ENCODE measurements at regions of chr20 and their contacts with region 1.

Region 1: GRCh38 chr20:37564388-37565133 is 36.9 kb upstream of the BLCAP start:
- DNase-seq: no peak
- H3K4me3 ChIP-seq: no peak overlapping the region
- H3K27ac ChIP-seq: no peak overlapping the region
- H3K4me1 ChIP-seq: no peaks in the 10 kb centered on the region
- H3K27me3 ChIP-seq: peaks cover 3% of the 10 kb centered on the region
- CTCF ChIP-seq: peak; percentile 75 to 89 (median 82)
- POLR2A ChIP-seq: no peak

Region 2: GRCh38 chr20:37519508-37520128 is 44.9 kb before region 1 on chr20:
- intact Hi-C with region 1: no loop called
- DNase-seq: no peak
- H3K4me3 ChIP-seq: no peak overlapping the region
- H3K27ac ChIP-seq: peak overlapping the region; percentile 71 to 88
- H3K4me1 ChIP-seq: peaks cover 35% of the 10 kb centered on the region
- H3K27me3 ChIP-seq: no peaks in the 10 kb centered on the region
- CTCF ChIP-seq: peak in 1 of 4 experiments; percentile 7
- POLR2A ChIP-seq: no peak

Region 3: DNA sequence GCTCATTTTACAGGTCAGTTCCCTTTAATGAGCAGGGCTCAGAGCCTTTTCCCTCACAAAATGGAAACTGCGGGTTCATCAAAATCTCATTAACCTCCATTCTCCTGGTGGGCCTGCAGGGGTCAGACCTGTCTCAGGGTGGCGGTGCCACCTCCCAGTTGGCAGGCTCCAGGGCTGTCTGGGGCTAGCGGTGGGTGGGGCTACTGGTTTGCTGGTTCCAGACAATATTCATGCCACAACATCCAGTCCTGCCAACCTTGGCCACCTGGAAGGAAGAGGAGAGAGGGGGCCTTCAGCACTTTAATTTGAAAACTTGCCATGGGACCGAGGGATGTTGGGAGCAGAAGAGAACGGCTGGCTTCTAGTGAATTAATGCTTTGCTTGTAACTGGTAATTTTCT is 87.4 kb after region 1 on chr20:
- intact Hi-C with region 1: no loop called
- DNase-seq: peak; percentile 21
- H3K4me3 ChIP-seq: no peak overlapping the region
- H3K27ac ChIP-seq: no peak overlapping the region
- H3K4me1 ChIP-seq: no peaks in the 10 kb centered on the region
- H3K27me3 ChIP-seq: no peaks in the 10 kb centered on the region
- CTCF ChIP-seq: peak in 3 of 4 experiments; percentile 30 to 61 (median 44)
- POLR2A ChIP-seq: no peak

Region 4: GRCh38 chr20:37734228-37734985 is 169.8 kb after region 1 on chr20:
- intact Hi-C with region 1: no loop called
- DNase-seq: no peak
- H3K4me3 ChIP-seq: no peak overlapping the region
- H3K27ac ChIP-seq: peak overlapping the region in 1 of 2 donors; percentile 3
- H3K4me1 ChIP-seq: no peaks in the 10 kb centered on the region
- H3K27me3 ChIP-seq: no peaks in the 10 kb centered on the region
- CTCF ChIP-seq: no peak
- POLR2A ChIP-seq: no peak

Region 5: DNA sequence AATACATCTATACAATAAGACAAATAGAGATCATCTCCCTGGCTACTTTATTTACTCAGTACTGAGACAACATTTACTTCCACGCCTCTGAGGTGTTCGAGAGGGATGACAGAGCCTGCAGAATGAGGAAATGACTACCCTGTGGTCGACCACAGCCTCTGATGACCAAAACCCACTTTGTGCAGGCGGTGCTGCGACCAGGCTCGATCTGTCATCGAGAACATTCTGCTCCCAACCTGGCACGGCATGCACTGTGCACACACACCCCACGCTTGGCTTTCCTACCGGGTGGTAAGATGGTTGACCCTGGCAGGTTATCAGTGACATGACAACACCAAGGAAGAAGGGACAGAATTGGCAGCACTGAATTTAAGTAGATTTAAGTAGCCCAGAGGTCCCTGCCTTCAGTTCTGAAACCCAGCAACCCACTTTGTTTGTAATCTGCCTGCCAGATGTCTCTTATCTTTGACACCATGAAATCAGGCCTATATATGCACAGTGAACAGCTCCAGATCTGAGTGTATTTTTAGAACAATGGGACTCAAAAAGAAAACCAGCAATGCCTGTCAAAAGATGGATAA is 426.1 kb after region 1 on chr20:
- intact Hi-C with region 1: loop called (anchors 5 kb)
- DNase-seq: peak; percentile 56
- H3K4me3 ChIP-seq: no peak overlapping the region
- H3K27ac ChIP-seq: peak overlapping the region in 1 of 2 donors; percentile 67
- H3K4me1 ChIP-seq: peaks cover 37% of the 10 kb centered on the region
- H3K27me3 ChIP-seq: no peaks in the 10 kb centered on the region
- CTCF ChIP-seq: no peak
- POLR2A ChIP-seq: no peak

Region 6: DNA sequence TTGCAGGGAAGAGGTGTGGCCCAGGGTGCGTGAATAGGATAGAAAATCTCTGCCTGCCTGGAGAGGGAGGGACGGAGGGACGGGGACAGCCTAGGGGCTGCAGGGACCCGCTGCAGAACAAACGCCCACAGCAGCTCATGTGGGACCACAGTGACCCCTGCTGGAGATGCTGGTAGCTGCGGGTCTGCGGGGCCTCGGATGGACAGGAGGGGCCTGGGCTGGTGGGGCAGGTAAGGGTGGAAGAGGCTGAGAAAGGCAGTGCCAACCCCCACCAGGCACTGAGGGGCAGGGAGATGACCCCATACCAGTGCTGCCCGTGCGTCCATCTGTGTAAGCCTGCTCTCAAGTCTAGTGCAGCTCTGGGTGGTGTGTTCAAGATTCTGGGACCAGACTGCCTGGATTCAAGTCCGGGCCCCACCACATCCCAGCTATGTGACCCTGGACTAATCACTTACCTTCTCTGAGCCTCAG is 656.6 kb after region 1 on chr20:
- intact Hi-C with region 1: loop called (anchors 5 kb)
- DNase-seq: no peak
- H3K4me3 ChIP-seq: no peak overlapping the region
- H3K27ac ChIP-seq: no peak overlapping the region
- H3K4me1 ChIP-seq: peaks cover 2% of the 10 kb centered on the region
- H3K27me3 ChIP-seq: no peaks in the 10 kb centered on the region
- CTCF ChIP-seq: peak; percentile 37 to 89 (median 79)
- POLR2A ChIP-seq: peak; percentile 11

Region 7: DNA sequence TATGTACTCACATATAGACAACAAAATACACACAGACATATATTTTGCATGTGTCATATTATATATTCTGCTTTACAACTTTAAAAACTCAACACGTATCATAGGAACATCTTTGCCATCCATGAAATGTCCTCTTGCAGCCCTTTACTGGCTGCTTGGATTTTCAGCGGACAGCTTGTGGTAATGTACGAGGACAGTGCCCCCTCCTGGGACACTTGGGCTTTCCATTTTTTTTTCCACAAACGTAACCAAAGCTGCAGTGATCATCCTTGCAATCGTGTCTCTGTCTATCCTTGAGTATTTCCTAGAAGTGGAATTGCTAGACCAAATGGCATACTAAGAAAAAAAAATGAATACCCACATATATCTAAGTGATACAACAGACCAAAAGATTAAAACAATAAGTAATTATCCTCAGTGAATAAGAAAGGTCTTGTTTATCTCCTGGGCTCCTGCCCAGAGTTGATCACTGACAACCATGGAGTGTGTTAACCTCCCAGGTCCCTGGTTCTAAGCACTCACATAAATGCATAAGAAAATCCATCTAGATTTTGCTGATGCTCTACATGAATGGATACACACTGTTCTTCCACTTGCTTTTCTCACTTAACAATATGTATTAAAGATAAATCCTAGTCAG is 757.5 kb after region 1 on chr20:
- intact Hi-C with region 1: loop called (anchors 10 kb)
- DNase-seq: peak; percentile 34
- H3K4me3 ChIP-seq: no peak overlapping the region
- H3K27ac ChIP-seq: no peak overlapping the region
- H3K4me1 ChIP-seq: no peaks in the 10 kb centered on the region
- H3K27me3 ChIP-seq: no peaks in the 10 kb centered on the region
- CTCF ChIP-seq: peak in 3 of 4 experiments; percentile 55 to 71 (median 62)
- POLR2A ChIP-seq: no peak